IMR-90 (cell line): ENCODE measurements at regions of chr9 and their contacts with region 1.

Region 1: GRCh38 chr9:33139421-33140228 is 27.5 kb downstream of the B4GALT1 start:
- DNase-seq: peak; percentile 96
- ATAC-seq: peak; percentile 87
- H3K4me3 ChIP-seq: no peak overlapping the region
- H3K27ac ChIP-seq: peak overlapping the region; percentile 72
- H3K4me1 ChIP-seq: peaks cover 27% of the 10 kb centered on the region
- H3K27me3 ChIP-seq: no peaks in the 10 kb centered on the region
- CTCF ChIP-seq: no peak
- POLR2A ChIP-seq: no peak
- RAD21 ChIP-seq: 0 out of 2 replicates have a peak, but pooled peaks have one; percentile 8

Region 2: DNA sequence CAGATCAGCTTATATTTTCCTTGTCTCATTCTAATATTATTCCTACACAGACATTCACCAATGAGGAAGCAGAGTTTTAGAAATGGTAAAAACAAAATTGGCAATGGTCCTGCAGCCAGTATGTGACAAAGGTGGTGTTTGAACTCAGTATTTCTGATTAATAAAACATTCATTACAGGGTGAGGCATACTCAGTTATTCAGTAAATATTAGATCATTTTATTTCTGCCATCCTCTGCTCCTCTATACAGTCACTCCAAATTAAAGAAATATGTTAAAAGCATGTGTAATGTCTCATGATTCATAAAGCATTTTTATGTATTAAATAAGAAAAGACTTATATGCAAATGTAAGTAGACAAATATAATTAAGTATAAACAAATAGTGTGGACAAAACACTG is 1439.8 kb before region 1 on chr9:
- CTCF ChIA-PET with region 1: no interaction called
- POLR2A ChIA-PET with region 1: no interaction called
- dilution Hi-C with region 1: no loop called
- in situ Hi-C with region 1: no loop called
- intact Hi-C with region 1: no loop called
- DNase-seq: no peak
- ATAC-seq: no peak
- H3K4me3 ChIP-seq: no peak overlapping the region
- H3K27ac ChIP-seq: no peak overlapping the region
- H3K4me1 ChIP-seq: no peaks in the 10 kb centered on the region
- H3K27me3 ChIP-seq: no peaks in the 10 kb centered on the region
- CTCF ChIP-seq: no peak
- POLR2A ChIP-seq: no peak
- RAD21 ChIP-seq: no peak

Region 3: DNA sequence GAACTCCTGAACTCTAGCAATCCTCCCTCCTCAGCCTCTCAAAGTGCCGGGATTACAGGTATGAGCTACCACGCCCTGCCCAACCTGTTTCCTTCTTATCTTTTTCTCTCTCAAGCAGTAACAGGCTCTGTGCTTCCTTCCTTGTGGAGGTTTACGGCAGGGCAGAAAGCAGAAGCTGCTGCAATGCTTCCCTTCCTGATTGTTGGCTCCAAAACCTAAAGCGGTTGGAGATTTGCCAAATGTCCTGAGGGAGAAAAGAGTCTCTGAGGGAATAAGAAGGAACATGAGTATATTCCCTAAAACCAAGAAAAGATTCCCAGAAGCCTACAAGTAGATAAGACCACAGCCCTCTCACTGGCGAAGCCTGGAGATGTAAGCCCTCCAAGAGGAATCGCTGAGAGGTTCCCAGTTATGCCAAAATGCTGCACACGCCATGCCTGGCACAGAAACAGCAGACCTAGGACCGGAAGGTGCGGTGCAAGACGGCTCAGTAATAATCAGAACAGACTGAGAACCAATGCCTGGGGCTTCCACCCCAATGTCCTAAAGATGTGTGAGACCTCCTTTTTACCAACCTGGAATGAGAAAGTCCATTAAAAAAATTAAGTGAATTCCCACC is 211.4 kb before region 1 on chr9:
- CTCF ChIA-PET with region 1: no interaction called
- POLR2A ChIA-PET with region 1: no interaction called
- dilution Hi-C with region 1: no loop called
- in situ Hi-C with region 1: no loop called
- intact Hi-C with region 1: no loop called
- DNase-seq: peak; percentile 9
- ATAC-seq: no peak
- H3K4me3 ChIP-seq: no peak overlapping the region
- H3K27ac ChIP-seq: no peak overlapping the region
- H3K4me1 ChIP-seq: no peaks in the 10 kb centered on the region
- H3K27me3 ChIP-seq: peaks cover 12% of the 10 kb centered on the region
- CTCF ChIP-seq: no peak
- POLR2A ChIP-seq: no peak
- RAD21 ChIP-seq: no peak

Region 4: GRCh38 chr9:33151007-33151557 is 11.5 kb after region 1 on chr9:
- CTCF ChIA-PET with region 1: interaction called, 3 read pairs
- POLR2A ChIA-PET with region 1: interaction called, 9 read pairs
- dilution Hi-C with region 1: no loop called
- in situ Hi-C with region 1: no loop called
- intact Hi-C with region 1: loop called (anchors 1 kb)
- DNase-seq: peak; percentile 98
- ATAC-seq: peak; percentile 97
- H3K4me3 ChIP-seq: no peak overlapping the region; the same call in 1 of the 2 replicates
- H3K27ac ChIP-seq: peak overlapping the region; percentile 83
- H3K4me1 ChIP-seq: peaks cover 10% of the 10 kb centered on the region
- H3K27me3 ChIP-seq: no peaks in the 10 kb centered on the region
- CTCF ChIP-seq: no peak
- POLR2A ChIP-seq: no peak
- RAD21 ChIP-seq: no peak; the same call in 1 of the 2 replicates